Spleen (tissue), 13 donors: ENCODE measurements at regions of chr2 and their contacts with region 1.

Region 1: GRCh38 chr2:131673392-131674173 is 145.9 kb downstream of the CCDC74A start:
- DNase-seq: peak; percentile 92
- H3K4me3 ChIP-seq: peak overlapping the region; percentile 6 to 68 (median 35)
- H3K27ac ChIP-seq: no peak overlapping the region
- H3K4me1 ChIP-seq: peaks cover 11 to 26% (median 22%) of the 10 kb centered on the region in 6 donors
- H3K27me3 ChIP-seq: peaks cover 3 to 53% (median 20%) of the 10 kb centered on the region in 7 donors
- CTCF ChIP-seq: peak; percentile 39 to 95 (median 90)
- POLR2A ChIP-seq: no peak

Region 2: GRCh38 chr2:131413148-131413747 is 260.3 kb before region 1 on chr2:
- intact Hi-C with region 1: loop called (anchors 10 kb)
- DNase-seq: no peak
- H3K4me3 ChIP-seq: no peak overlapping the region
- H3K27ac ChIP-seq: no peak overlapping the region
- H3K4me1 ChIP-seq: no peaks in the 10 kb centered on the region
- H3K27me3 ChIP-seq: peaks cover 0 to 30% (median 0%) of the 10 kb centered on the region in 7 donors
- CTCF ChIP-seq: peak; percentile 54 to 78 (median 68)
- POLR2A ChIP-seq: no peak